ENCODE measurements at regions of chr13 and their contacts with region 1.

Region 1: DNA sequence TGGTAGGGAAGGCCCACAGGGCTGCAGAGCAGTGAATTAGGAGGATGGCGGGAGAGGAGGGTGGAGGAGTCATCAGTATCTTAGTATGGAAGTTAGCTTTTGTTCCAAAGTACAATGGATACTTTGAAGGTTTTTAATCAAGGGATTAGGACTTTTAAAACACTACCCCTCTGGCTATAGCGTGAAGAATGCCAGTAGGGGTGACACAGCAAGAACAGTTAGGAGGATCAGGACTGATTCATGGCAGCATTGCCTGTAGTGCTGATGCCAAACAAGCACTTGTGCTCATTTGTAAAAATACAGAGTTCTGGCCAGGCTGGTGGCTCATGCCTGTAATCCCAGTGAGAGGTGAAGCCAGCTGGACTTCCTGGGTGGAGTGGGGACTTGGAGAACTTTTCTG is 46.2 kb downstream of the SKA3 start:
- DNase-seq: peak in 2 of 3 donors; percentile 17 to 25
- H3K4me3 ChIP-seq: no peak overlapping the region
- H3K27ac ChIP-seq: no peak overlapping the region
- H3K4me1 ChIP-seq: no peaks in the 10 kb centered on the region
- H3K27me3 ChIP-seq: no peaks in the 10 kb centered on the region

Region 2: DNA sequence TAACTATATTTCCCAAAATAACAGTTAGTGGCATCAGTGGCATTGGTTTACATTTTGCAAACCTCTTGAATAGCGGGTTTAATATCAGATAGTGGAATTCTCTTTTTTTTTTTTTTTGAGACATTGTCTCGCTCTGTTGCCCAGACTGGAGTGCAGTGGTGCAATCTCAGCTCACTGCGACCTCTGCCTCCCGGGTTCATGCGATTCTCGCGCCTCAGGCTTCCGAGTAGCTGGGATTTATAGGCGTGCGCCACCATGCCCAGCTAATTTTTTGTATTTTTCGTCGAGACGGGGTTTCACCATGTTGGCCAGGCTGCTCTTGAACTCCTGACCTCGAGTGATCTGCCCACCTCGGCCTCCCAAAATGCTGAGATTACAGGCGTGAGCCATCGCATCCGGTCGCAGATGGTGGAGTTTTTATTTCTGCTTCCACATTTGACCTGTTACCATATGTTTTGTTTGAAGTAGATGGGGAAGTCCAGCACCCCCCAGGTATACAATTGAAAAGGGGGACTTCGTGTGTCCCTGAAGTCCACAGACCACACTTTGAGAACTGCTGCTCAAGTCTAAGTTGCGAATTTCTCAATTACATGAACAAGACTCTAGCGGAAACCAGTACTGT is 187.1 kb before region 1 on chr13:
- CTCF ChIA-PET with region 1: interaction called, 25 read pairs
- POLR2A ChIA-PET with region 1: no interaction called
- DNase-seq: no peak
- H3K4me3 ChIP-seq: no peak overlapping the region
- H3K27ac ChIP-seq: peak overlapping the region; percentile 72 to 84
- H3K4me1 ChIP-seq: peaks cover 0 to 37% (median 27%) of the 10 kb centered on the region in 4 experiments
- H3K27me3 ChIP-seq: no peaks in the 10 kb centered on the region